Heart left ventricle (tissue), 16 donors: ENCODE measurements at regions of chr5 and their contacts with region 1.

Region 1: GRCh38 chr5:68137511-68138140 is 77.9 kb upstream of the PIK3R1 start:
- DNase-seq: no peak
- ATAC-seq: peak in 2 of 4 donors; percentile 54 to 55
- H3K4me3 ChIP-seq: no peak overlapping the region
- H3K27ac ChIP-seq: peak overlapping the region in 6 of 12 donors; percentile 0 to 68 (median 36)
- H3K4me1 ChIP-seq: peaks cover 0 to 12% (median under 1%) of the 10 kb centered on the region in 12 donors
- H3K27me3 ChIP-seq: no peaks in the 10 kb centered on the region
- CTCF ChIP-seq: no peak
- POLR2A ChIP-seq: no peak

Region 2: DNA sequence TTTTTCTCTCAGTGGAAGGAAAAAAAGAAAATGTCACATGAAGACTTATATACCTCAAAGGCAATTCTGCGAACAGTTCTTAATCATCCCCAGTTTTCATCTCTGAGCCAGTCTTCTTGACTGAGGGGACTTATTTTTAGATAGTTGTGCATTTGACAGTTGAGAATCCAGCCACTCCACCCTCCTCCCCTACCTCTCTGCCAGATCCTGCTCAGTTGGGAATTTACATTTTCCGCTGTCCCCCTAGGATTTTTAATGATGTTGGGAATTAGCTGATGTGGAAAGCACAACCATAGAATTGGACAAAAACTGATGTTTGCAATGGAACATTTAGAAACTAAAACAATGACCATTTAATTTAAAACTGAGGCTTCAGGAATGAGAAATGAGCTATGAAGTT is 116.4 kb before region 1 on chr5:
- intact Hi-C with region 1: no loop called
- DNase-seq: no peak
- ATAC-seq: no peak
- H3K4me3 ChIP-seq: no peak overlapping the region
- H3K27ac ChIP-seq: no peak overlapping the region
- H3K4me1 ChIP-seq: peaks cover 0 to 15% (median 0%) of the 10 kb centered on the region in 12 donors
- H3K27me3 ChIP-seq: no peaks in the 10 kb centered on the region
- CTCF ChIP-seq: no peak
- POLR2A ChIP-seq: no peak

Region 3: DNA sequence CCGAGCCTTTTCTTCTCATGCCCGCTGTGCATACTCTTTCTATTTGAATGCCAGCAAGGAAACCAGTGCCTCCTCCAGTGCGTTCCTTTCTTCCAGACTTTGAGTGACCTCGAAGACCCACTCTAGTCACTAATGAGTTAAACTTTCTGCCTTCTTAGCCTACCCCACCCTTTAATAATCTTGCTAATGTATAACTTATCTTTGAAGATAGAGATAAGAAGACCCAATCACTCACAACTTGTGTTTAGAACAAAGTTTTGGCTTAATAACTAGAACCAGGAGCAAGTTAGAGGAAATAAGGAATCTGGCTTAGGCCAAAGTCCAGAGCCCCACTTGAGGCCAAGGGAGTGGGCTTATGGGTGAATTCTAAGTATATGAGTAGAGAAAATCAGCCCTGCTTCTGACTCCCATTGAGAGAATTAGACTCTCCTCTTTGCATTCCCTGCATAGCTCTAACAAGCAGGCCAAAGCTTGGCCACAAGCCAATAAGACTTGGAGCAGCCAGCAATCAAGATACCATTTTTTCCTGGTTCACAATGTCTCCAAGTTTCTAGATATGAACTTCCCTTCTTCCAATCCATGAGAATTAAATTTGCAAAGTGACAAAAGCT is 103.6 kb before region 1 on chr5:
- intact Hi-C with region 1: loop called in 1 of 10 experiments (anchors 10 kb)
- DNase-seq: peak in 3 of 5 donors; percentile 33 to 58 (median 43)
- ATAC-seq: no peak
- H3K4me3 ChIP-seq: no peak overlapping the region
- H3K27ac ChIP-seq: peak overlapping the region in 1 of 12 donors; percentile 2
- H3K4me1 ChIP-seq: peaks cover 0 to 23% (median 11%) of the 10 kb centered on the region in 12 donors
- H3K27me3 ChIP-seq: no peaks in the 10 kb centered on the region
- CTCF ChIP-seq: no peak
- POLR2A ChIP-seq: no peak

Region 4: GRCh38 chr5:68200288-68200687 is 62.7 kb after region 1 on chr5:
- intact Hi-C with region 1: loop called in 1 of 10 experiments (anchors 2 kb)
- DNase-seq: no peak
- ATAC-seq: no peak
- H3K4me3 ChIP-seq: no peak overlapping the region
- H3K27ac ChIP-seq: no peak overlapping the region
- H3K4me1 ChIP-seq: peaks cover 0 to 10% (median 0%) of the 10 kb centered on the region in 12 donors
- H3K27me3 ChIP-seq: no peaks in the 10 kb centered on the region
- CTCF ChIP-seq: no peak
- POLR2A ChIP-seq: no peak